ENCODE measurements at regions of chr12 and their contacts with region 1.

Region 1: GRCh38 chr12:75722714-75723200 is 211.3 kb upstream of the KRR1 start:
- DNase-seq: peak in 7 of 10 donors; percentile 19 to 82 (median 54)
- H3K4me3 ChIP-seq: peak overlapping the region in 10 of 59 donors; percentile 0 to 27 (median 12)
- H3K27ac ChIP-seq: peak overlapping the region in 26 of 59 donors; percentile 9 to 79 (median 50)
- H3K27me3 ChIP-seq: no peaks in the 10 kb centered on the region
- CTCF ChIP-seq: peak in 7 of 56 donors; percentile 7 to 31 (median 21)

Region 2: DNA sequence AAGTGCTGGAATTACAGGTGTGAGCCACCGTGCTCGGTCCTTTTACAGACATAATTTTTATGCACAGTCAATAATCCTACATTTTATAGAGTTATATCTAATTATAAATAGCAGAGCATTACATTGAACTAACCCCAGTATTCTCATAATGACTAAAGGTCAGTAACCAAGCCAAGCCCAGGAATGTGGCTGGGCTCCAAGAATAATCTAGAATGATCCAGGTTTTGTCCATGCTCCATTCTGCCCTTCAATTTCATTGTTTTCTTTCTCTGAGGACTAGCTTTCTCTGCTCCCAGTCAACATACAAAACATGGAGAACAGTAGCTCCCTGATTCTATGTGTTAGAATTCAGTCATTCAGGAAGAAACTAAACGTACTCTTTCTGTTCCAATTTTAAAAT is 119.3 kb before region 1 on chr12:
- intact Hi-C with region 1: loop called in 1 of 2 experiments (anchors 5 kb)
- DNase-seq: no peak
- H3K4me3 ChIP-seq: no peak overlapping the region
- H3K27ac ChIP-seq: no peak overlapping the region
- H3K27me3 ChIP-seq: no peaks in the 10 kb centered on the region
- CTCF ChIP-seq: no peak

Region 3: GRCh38 chr12:75658901-75659383 is 63.8 kb before region 1 on chr12:
- intact Hi-C with region 1: loop called in 1 of 2 experiments (anchors 5 kb)
- DNase-seq: peak in 1 of 10 donors; percentile 28
- H3K4me3 ChIP-seq: peak overlapping the region in 1 of 59 donors; percentile 12
- H3K27ac ChIP-seq: peak overlapping the region in 44 of 59 donors; percentile 1 to 75 (median 47)
- H3K27me3 ChIP-seq: no peaks in the 10 kb centered on the region
- CTCF ChIP-seq: peak in 1 of 56 donors; percentile 11

Region 4: GRCh38 chr12:75850721-75851462 is 128.1 kb after region 1 on chr12:
- intact Hi-C with region 1: loop called (anchors 5 to 10 kb)
- DNase-seq: no peak
- H3K4me3 ChIP-seq: no peak overlapping the region
- H3K27ac ChIP-seq: no peak overlapping the region
- H3K27me3 ChIP-seq: peaks cover 0 to 42% (median 0%) of the 10 kb centered on the region in 45 donors
- CTCF ChIP-seq: no peak

Measured in dorsolateral prefrontal cortex (tissue), 120 donors.